ENCODE measurements at regions of chr17 and their contacts with region 1.

Region 1: GRCh38 chr17:2416010-2416734 is 15.3 kb upstream of the MNT start:
- DNase-seq: peak; percentile 89
- ATAC-seq: peak; percentile 75
- H3K4me3 Mint-ChIP-seq: no peak overlapping the region
- H3K27ac Mint-ChIP-seq: no peak overlapping the region
- H3K4me1 Mint-ChIP-seq: no peaks in the 10 kb centered on the region
- H3K27me3 Mint-ChIP-seq: no peaks in the 10 kb centered on the region

Region 2: GRCh38 chr17:2383628-2384167 is 32.5 kb before region 1 on chr17:
- POLR2A ChIA-PET with region 1: interaction called, 33 read pairs
- DNase-seq: no peak
- ATAC-seq: no peak
- H3K4me3 Mint-ChIP-seq: no peak overlapping the region
- H3K27ac Mint-ChIP-seq: no peak overlapping the region
- H3K4me1 Mint-ChIP-seq: peaks cover 7% of the 10 kb centered on the region
- H3K27me3 Mint-ChIP-seq: no peaks in the 10 kb centered on the region

Region 3: GRCh38 chr17:2392252-2393173 is 23.7 kb before region 1 on chr17:
- POLR2A ChIA-PET with region 1: interaction called, 12 read pairs
- DNase-seq: peak; percentile 100
- ATAC-seq: peak; percentile 55
- H3K4me3 Mint-ChIP-seq: peak overlapping the region; percentile 93
- H3K27ac Mint-ChIP-seq: peak overlapping the region; percentile 95
- H3K4me1 Mint-ChIP-seq: peaks cover 40% of the 10 kb centered on the region
- H3K27me3 Mint-ChIP-seq: no peaks in the 10 kb centered on the region

Region 4: DNA sequence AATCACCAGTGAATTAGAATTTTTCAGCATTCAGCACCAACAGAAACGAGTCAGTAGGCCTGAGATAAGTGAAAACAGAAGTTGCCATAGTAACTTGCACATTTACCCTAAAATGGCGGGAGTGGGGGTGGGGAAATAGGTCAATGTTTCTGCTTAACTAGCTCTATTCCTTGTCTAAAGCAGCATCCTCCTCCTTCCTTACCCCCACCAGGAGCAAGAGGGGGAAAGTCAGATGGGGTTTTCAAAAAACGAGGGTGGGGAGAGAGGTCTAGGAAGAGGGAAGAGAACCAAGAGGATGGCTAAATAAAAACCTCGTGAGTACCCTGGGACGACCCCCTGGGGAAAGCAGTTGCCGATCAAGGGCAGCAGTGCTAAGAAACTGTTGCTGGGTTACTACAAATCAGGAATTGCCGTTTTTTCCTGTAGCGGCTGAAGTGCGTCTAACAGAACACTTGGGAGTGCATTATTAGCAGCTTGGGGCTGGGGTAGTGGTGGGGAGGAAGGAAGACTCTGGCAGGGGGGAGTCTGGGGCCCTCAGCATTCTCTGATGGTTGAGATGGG is 19.1 kb after region 1 on chr17:
- POLR2A ChIA-PET with region 1: no interaction called
- DNase-seq: no peak
- ATAC-seq: no peak
- H3K4me3 Mint-ChIP-seq: no peak overlapping the region
- H3K27ac Mint-ChIP-seq: no peak overlapping the region
- H3K4me1 Mint-ChIP-seq: no peaks in the 10 kb centered on the region
- H3K27me3 Mint-ChIP-seq: no peaks in the 10 kb centered on the region